Prostate gland (tissue), 2 donors: ENCODE measurements at regions of chr12 and their contacts with region 1.

Region 1: GRCh38 chr12:41606468-41607460 is 418.6 kb downstream of the PDZRN4 start:
- DNase-seq: no peak
- H3K4me3 ChIP-seq: no peak overlapping the region
- H3K27ac ChIP-seq: no peak overlapping the region
- H3K4me1 ChIP-seq: no peaks in the 10 kb centered on the region
- H3K27me3 ChIP-seq: no peaks in the 10 kb centered on the region
- CTCF ChIP-seq: no peak
- POLR2A ChIP-seq: no peak

Region 2: GRCh38 chr12:41589878-41590277 is 16.9 kb before region 1 on chr12:
- intact Hi-C with region 1: loop called (anchors 1 kb)
- DNase-seq: no peak
- H3K4me3 ChIP-seq: no peak overlapping the region
- H3K27ac ChIP-seq: no peak overlapping the region
- H3K4me1 ChIP-seq: no peaks in the 10 kb centered on the region
- H3K27me3 ChIP-seq: no peaks in the 10 kb centered on the region
- CTCF ChIP-seq: no peak
- POLR2A ChIP-seq: no peak

Region 3: GRCh38 chr12:41981758-41982157 is 375.0 kb after region 1 on chr12:
- intact Hi-C with region 1: no loop called
- DNase-seq: no peak
- H3K4me3 ChIP-seq: no peak overlapping the region
- H3K27ac ChIP-seq: no peak overlapping the region
- H3K4me1 ChIP-seq: no peaks in the 10 kb centered on the region
- H3K27me3 ChIP-seq: no peaks in the 10 kb centered on the region
- CTCF ChIP-seq: no peak
- POLR2A ChIP-seq: no peak